Adrenal gland (tissue), 19 donors: ENCODE measurements at regions of chr5 and their contacts with region 1.

Region 1: GRCh38 chr5:77076961-77077823 is 9.9 kb downstream of the ZBED3 start:
- DNase-seq: peak; percentile 75 to 84 (median 79)
- H3K4me3 ChIP-seq: peak overlapping the region in 3 of 4 donors; percentile 32 to 83 (median 37)
- H3K27ac ChIP-seq: peak overlapping the region in 4 of 5 donors; percentile 60 to 85 (median 72)
- H3K4me1 ChIP-seq: peaks cover 5 to 6% of the 10 kb centered on the region in 2 donors
- H3K27me3 ChIP-seq: no peaks in the 10 kb centered on the region
- CTCF ChIP-seq: peak in 3 of 6 experiments; percentile 81 to 83 (median 83)
- POLR2A ChIP-seq: peak in 1 of 2 donors; percentile 36

Region 2: GRCh38 chr5:76874088-76874581 is 203.1 kb before region 1 on chr5:
- intact Hi-C with region 1: loop called in 1 of 2 experiments (anchors 10 kb)
- DNase-seq: no peak
- H3K4me3 ChIP-seq: no peak overlapping the region
- H3K27ac ChIP-seq: no peak overlapping the region
- H3K4me1 ChIP-seq: peaks cover 0 to 6% of the 10 kb centered on the region in 2 donors
- H3K27me3 ChIP-seq: no peaks in the 10 kb centered on the region
- CTCF ChIP-seq: no peak
- POLR2A ChIP-seq: no peak

Region 3: DNA sequence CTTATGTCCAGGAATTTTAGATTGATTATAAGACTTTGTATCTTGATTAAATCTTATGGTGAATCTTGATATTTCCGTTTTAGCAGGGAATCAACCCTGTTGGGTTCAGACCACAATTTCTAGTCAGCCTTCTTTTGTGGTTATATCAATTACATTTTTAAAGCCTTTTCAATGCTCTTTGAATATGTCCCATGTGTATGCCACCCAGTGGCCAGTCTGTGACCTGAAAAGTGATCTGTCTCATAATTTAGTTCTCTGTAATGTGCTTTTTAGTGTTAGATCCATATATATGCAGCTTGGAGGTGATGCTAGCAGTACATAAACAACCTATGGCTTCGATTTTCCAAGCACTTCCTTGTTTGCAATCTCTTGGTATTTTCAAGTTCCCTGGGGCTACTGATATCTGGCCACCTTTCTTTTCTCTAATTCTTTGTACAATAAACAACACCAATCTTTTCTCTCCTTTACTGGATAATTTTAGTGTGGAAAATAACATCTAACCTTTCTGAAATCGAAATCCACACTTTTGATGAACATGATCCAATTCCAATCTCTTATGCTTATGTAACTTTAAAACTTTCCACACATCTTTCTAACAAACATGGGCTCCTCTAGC is 162.0 kb after region 1 on chr5:
- intact Hi-C with region 1: no loop called
- DNase-seq: peak in 2 of 7 donors; percentile 30 to 40
- H3K4me3 ChIP-seq: no peak overlapping the region
- H3K27ac ChIP-seq: no peak overlapping the region
- H3K4me1 ChIP-seq: no peaks in the 10 kb centered on the region
- H3K27me3 ChIP-seq: no peaks in the 10 kb centered on the region
- CTCF ChIP-seq: peak in 5 of 6 experiments; percentile 28 to 44 (median 31)
- POLR2A ChIP-seq: no peak